CD14-positive monocyte (primary cell): ENCODE measurements at regions of chr17 and their contacts with region 1.

Region 1: DNA sequence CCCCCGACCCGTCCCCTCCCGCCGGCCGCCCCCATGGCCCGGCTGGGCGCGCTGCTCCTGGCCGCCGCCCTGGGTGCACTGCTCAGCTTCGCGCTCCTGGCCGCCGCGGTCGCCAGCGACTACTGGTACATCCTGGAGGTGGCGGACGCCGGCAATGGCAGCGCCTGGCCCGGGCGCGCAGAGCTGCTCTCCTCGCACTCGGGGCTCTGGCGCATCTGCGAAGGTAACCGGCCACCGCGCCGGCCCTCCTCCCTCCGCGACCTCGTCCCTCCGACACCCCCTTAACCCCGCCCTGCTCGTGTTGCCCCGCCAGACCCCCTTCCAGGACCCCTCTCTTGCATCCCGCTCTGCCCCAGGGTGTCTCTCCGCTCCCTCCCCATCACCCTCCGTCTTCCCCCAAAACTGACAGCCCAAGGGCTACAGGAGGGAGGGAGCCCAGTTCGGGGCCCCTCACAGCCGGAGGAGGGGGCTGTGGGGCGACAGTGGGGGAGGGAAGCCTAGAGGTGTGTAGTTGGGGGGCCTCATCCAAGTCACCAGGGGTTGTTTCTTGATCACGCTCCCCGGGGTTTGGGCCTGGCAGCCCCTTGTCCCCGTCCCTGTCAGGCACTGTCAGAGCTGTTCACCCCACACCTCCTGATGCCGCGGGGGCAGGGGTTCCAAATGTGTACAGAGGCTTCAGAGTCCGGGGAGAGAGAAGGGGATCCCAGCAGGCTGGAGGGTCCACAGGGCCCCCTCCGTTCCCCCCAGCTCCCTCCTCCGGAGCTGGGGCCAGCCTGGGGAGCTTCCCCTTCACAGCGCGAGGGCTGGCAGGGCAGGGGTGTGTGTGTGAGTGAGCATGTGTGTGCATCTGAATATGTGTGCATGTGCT is 794 bp downstream of the TMEM235 start:
- DNase-seq: no peak
- H3K4me3 ChIP-seq: no peak overlapping the region
- H3K4me3 Mint-ChIP-seq: peak overlapping the region; percentile 37 to 72
- H3K27ac ChIP-seq: no peak overlapping the region
- H3K27ac Mint-ChIP-seq: no peak overlapping the region
- H3K4me1 ChIP-seq: peaks cover 3 to 11% of the 10 kb centered on the region in 2 donors
- H3K4me1 Mint-ChIP-seq: peaks cover 11% of the 10 kb centered on the region
- H3K27me3 ChIP-seq: peaks cover 15 to 41% of the 10 kb centered on the region in 2 donors
- H3K27me3 Mint-ChIP-seq: peaks cover 52 to 69% (median 60%) of the 10 kb centered on the region in 3 donors
- CTCF ChIP-seq: no peak

Region 2: GRCh38 chr17:78104540-78104941 is 127.7 kb before region 1 on chr17:
- intact Hi-C with region 1: loop called in 1 of 2 experiments (anchors 5 kb)
- DNase-seq: no peak
- H3K4me3 ChIP-seq: no peak overlapping the region
- H3K4me3 Mint-ChIP-seq: no peak overlapping the region
- H3K27ac ChIP-seq: no peak overlapping the region
- H3K27ac Mint-ChIP-seq: no peak overlapping the region
- H3K4me1 ChIP-seq: no peaks in the 10 kb centered on the region
- H3K4me1 Mint-ChIP-seq: no peaks in the 10 kb centered on the region
- H3K27me3 ChIP-seq: no peaks in the 10 kb centered on the region
- H3K27me3 Mint-ChIP-seq: no peaks in the 10 kb centered on the region
- CTCF ChIP-seq: no peak